ENCODE measurements at regions of chr9 and their contacts with region 1.

Region 1: GRCh38 chr9:77456829-77457437 is 191.2 kb downstream of the GNA14 start:
- DNase-seq: peak; percentile 77
- ATAC-seq: peak; percentile 80
- H3K4me3 ChIP-seq: no peak overlapping the region
- H3K4me3 Mint-ChIP-seq: no peak overlapping the region
- H3K27ac ChIP-seq: no peak overlapping the region
- H3K27ac Mint-ChIP-seq: no peak overlapping the region
- H3K4me1 ChIP-seq: peaks cover 0 to 4% of the 10 kb centered on the region in 2 donors
- H3K4me1 Mint-ChIP-seq: peaks cover 10% of the 10 kb centered on the region
- H3K27me3 ChIP-seq: peaks cover 0 to 6% (median 0%) of the 10 kb centered on the region in 4 experiments
- H3K27me3 Mint-ChIP-seq: peaks cover 6% of the 10 kb centered on the region
- CTCF ChIP-seq: peak; percentile 94

Region 2: GRCh38 chr9:77163884-77164283 is 293.0 kb before region 1 on chr9:
- CTCF ChIA-PET with region 1: interaction called, 54 read pairs
- POLR2A ChIA-PET with region 1: no interaction called
- intact Hi-C with region 1: loop called (anchors 1 kb)
- DNase-seq: no peak
- ATAC-seq: no peak
- H3K4me3 ChIP-seq: no peak overlapping the region
- H3K4me3 Mint-ChIP-seq: no peak overlapping the region
- H3K27ac ChIP-seq: no peak overlapping the region
- H3K27ac Mint-ChIP-seq: no peak overlapping the region
- H3K4me1 ChIP-seq: no peaks in the 10 kb centered on the region
- H3K4me1 Mint-ChIP-seq: no peaks in the 10 kb centered on the region
- H3K27me3 ChIP-seq: no peaks in the 10 kb centered on the region
- H3K27me3 Mint-ChIP-seq: peaks cover 24% of the 10 kb centered on the region
- CTCF ChIP-seq: no peak

Region 3: GRCh38 chr9:77442200-77442832 is 14.6 kb before region 1 on chr9:
- CTCF ChIA-PET with region 1: interaction called, 29 read pairs
- POLR2A ChIA-PET with region 1: no interaction called
- intact Hi-C with region 1: no loop called
- DNase-seq: no peak
- ATAC-seq: no peak
- H3K4me3 ChIP-seq: no peak overlapping the region
- H3K4me3 Mint-ChIP-seq: no peak overlapping the region
- H3K27ac ChIP-seq: no peak overlapping the region
- H3K27ac Mint-ChIP-seq: no peak overlapping the region
- H3K4me1 ChIP-seq: no peaks in the 10 kb centered on the region
- H3K4me1 Mint-ChIP-seq: no peaks in the 10 kb centered on the region
- H3K27me3 ChIP-seq: no peaks in the 10 kb centered on the region
- H3K27me3 Mint-ChIP-seq: peaks cover 13% of the 10 kb centered on the region
- CTCF ChIP-seq: no peak

Region 4: DNA sequence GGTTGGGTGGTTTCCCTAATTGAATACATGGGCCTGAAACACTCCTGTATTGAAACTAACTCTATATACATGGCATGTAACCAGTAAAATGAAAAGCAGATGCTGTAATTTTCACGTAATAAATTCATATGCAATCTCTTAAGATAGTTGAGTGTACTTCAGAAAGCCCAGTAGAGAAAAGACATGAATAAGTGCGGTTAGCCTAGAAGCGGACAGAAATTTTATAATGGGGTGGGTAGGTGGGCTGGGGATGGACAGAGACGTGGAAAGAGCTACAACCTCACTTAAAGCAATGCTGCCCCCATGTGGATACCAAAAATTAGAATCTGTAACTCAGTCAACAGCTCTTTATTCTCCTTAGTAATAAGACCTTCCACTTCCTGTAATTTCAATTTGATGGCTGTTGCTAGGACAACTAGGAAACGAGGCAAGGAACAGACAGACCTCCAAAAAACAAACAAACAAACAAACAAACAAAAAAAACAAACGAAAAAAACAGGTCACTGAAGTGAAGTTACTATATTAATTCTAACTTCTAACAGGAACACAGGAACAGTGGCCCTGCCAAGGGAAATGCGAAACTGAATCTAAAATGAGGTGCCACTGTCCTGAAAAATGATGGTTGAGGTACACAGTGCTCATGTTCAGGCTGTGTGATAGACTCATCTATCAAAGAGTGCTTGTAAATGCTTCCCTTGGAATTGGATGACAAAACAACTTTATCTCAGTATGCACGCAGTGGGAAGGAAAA is 294.6 kb after region 1 on chr9:
- CTCF ChIA-PET with region 1: interaction called, 10 read pairs
- POLR2A ChIA-PET with region 1: no interaction called
- intact Hi-C with region 1: loop called (anchors 5 kb)
- DNase-seq: peak; percentile 36
- ATAC-seq: no peak
- H3K4me3 ChIP-seq: no peak overlapping the region
- H3K4me3 Mint-ChIP-seq: no peak overlapping the region
- H3K27ac ChIP-seq: no peak overlapping the region
- H3K27ac Mint-ChIP-seq: no peak overlapping the region
- H3K4me1 ChIP-seq: no peaks in the 10 kb centered on the region
- H3K4me1 Mint-ChIP-seq: no peaks in the 10 kb centered on the region
- H3K27me3 ChIP-seq: no peaks in the 10 kb centered on the region
- H3K27me3 Mint-ChIP-seq: no peaks in the 10 kb centered on the region
- CTCF ChIP-seq: peak; percentile 45

Region 5: GRCh38 chr9:78213712-78214111 is 756.8 kb after region 1 on chr9:
- CTCF ChIA-PET with region 1: interaction called, 4 read pairs
- POLR2A ChIA-PET with region 1: no interaction called
- intact Hi-C with region 1: loop called (anchors 5 kb)
- DNase-seq: peak; percentile 48
- ATAC-seq: no peak
- H3K4me3 ChIP-seq: no peak overlapping the region
- H3K4me3 Mint-ChIP-seq: no peak overlapping the region
- H3K27ac ChIP-seq: no peak overlapping the region
- H3K27ac Mint-ChIP-seq: no peak overlapping the region
- H3K4me1 ChIP-seq: peaks cover 19 to 20% of the 10 kb centered on the region in 2 donors
- H3K4me1 Mint-ChIP-seq: peaks cover 27% of the 10 kb centered on the region
- H3K27me3 ChIP-seq: no peaks in the 10 kb centered on the region
- H3K27me3 Mint-ChIP-seq: peaks cover 1% of the 10 kb centered on the region
- CTCF ChIP-seq: peak; percentile 42